ENCODE measurements at regions of chr1 and their contacts with region 1.

Region 1: GRCh38 chr1:47424336-47424982 is 8.4 kb downstream of the FOXE3 start:
- DNase-seq: peak in 2 of 10 donors; percentile 22 to 39

Region 2: DNA sequence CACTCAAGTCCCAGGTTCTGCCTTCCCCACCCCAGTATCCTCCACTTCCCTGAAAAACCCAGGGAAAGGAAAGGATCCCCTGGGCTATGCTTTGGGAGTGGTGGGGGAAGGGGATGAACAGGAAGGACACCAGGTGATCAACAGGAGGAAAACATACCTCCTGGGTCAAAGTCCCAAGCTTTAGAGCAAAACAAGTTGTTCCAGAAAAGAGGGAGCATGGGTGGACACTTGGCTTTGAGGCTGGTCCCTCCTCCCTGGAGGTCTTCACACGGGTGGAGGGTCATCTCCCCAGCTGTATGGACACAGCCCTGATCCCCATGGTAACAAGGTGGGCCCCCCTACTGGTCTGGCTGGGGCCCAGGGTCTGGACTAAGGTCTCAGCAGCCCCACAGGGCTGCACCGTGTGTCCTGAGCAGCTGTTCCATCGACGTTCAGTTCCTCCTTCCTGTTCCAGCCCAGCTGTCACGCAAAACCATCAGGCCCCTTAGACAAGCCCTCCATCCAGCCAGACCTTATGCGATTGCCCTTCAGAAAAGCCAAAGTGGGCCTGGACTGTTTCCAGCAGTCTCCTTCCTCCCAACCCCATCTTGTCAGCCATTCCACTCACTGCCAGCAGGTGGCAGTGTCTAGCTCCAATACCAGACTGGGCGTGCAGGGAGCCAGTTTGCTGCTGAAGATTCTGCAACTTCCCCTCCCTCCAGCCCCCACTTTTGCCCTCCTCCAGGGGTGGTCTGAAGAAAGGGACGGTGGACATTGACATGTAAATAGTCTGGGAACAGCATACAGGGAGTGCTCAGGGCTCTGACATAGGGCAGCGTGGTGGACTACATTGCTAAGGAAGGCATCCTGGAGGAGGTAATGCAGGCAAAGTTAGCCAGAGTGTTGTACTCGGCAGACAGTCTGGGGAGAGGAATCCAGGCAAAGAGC is 231.7 kb before region 1 on chr1:
- intact Hi-C with region 1: loop called (anchors 2 kb)
- DNase-seq: peak in 8 of 10 donors; percentile 60 to 94 (median 72)